CD4-positive, alpha-beta T cell (primary cell): ENCODE measurements at regions of chr1 and their contacts with region 1.

Region 1: DNA sequence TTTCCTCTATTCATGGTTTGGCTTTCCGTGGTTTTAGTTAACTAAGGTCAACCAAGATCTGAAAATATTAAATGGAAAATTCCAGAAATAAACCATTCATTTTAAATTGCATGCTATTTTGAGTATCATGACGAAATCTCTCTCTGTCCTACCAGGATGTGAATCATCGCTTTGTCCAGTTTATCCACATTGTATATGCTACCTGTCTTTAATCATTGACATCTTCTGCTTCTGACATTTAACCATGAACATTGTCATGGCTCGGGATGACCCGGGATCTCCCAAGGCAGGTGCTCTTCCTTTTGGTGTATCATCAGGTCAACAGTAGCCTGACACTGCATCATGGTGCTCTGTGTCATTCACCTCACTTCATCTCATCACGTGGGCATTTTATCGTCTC is 125.5 kb upstream of the HNRNPU start:
- DNase-seq: no peak
- ATAC-seq: no peak
- H3K4me3 ChIP-seq: no peak overlapping the region
- H3K4me3 Mint-ChIP-seq: no peak overlapping the region
- H3K27ac ChIP-seq: no peak overlapping the region
- H3K27ac Mint-ChIP-seq: no peak overlapping the region
- H3K4me1 ChIP-seq: no peaks in the 10 kb centered on the region
- H3K4me1 Mint-ChIP-seq: no peaks in the 10 kb centered on the region
- H3K27me3 ChIP-seq: no peaks in the 10 kb centered on the region
- H3K27me3 Mint-ChIP-seq: no peaks in the 10 kb centered on the region
- CTCF ChIP-seq: no peak

Region 2: GRCh38 chr1:244854865-244855578 is 134.8 kb before region 1 on chr1:
- CTCF ChIA-PET with region 1: no interaction called
- POLR2A ChIA-PET with region 1: no interaction called
- intact Hi-C with region 1: no loop called
- DNase-seq: peak in 1 of 14 experiments; percentile 29
- ATAC-seq: peak; percentile 31
- H3K4me3 ChIP-seq: no peak overlapping the region
- H3K4me3 Mint-ChIP-seq: peak overlapping the region; percentile 40
- H3K27ac ChIP-seq: peak overlapping the region; percentile 13 to 50
- H3K27ac Mint-ChIP-seq: peak overlapping the region; percentile 78
- H3K4me1 ChIP-seq: peaks cover 30% of the 10 kb centered on the region
- H3K4me1 Mint-ChIP-seq: peaks cover 99% of the 10 kb centered on the region
- H3K27me3 ChIP-seq: no peaks in the 10 kb centered on the region
- H3K27me3 Mint-ChIP-seq: no peaks in the 10 kb centered on the region
- CTCF ChIP-seq: no peak

Region 3: GRCh38 chr1:244945109-244945671 is 44.6 kb before region 1 on chr1:
- CTCF ChIA-PET with region 1: no interaction called
- POLR2A ChIA-PET with region 1: no interaction called
- intact Hi-C with region 1: no loop called
- DNase-seq: peak in 1 of 14 experiments; percentile 11
- ATAC-seq: no peak
- H3K4me3 ChIP-seq: no peak overlapping the region
- H3K4me3 Mint-ChIP-seq: no peak overlapping the region
- H3K27ac ChIP-seq: no peak overlapping the region
- H3K27ac Mint-ChIP-seq: no peak overlapping the region
- H3K4me1 ChIP-seq: no peaks in the 10 kb centered on the region
- H3K4me1 Mint-ChIP-seq: no peaks in the 10 kb centered on the region
- H3K27me3 ChIP-seq: no peaks in the 10 kb centered on the region
- H3K27me3 Mint-ChIP-seq: no peaks in the 10 kb centered on the region
- CTCF ChIP-seq: no peak

Region 4: GRCh38 chr1:245031041-245031440 is 41.2 kb after region 1 on chr1:
- CTCF ChIA-PET with region 1: no interaction called
- POLR2A ChIA-PET with region 1: no interaction called
- intact Hi-C with region 1: loop called in 1 of 2 experiments (anchors 5 kb)
- DNase-seq: no peak
- ATAC-seq: no peak
- H3K4me3 ChIP-seq: no peak overlapping the region
- H3K4me3 Mint-ChIP-seq: no peak overlapping the region
- H3K27ac ChIP-seq: no peak overlapping the region
- H3K27ac Mint-ChIP-seq: no peak overlapping the region
- H3K4me1 ChIP-seq: peaks cover 4% of the 10 kb centered on the region
- H3K4me1 Mint-ChIP-seq: no peaks in the 10 kb centered on the region
- H3K27me3 ChIP-seq: no peaks in the 10 kb centered on the region
- H3K27me3 Mint-ChIP-seq: no peaks in the 10 kb centered on the region
- CTCF ChIP-seq: no peak

Region 5: GRCh38 chr1:245156081-245156735 is 166.4 kb after region 1 on chr1:
- CTCF ChIA-PET with region 1: no interaction called
- POLR2A ChIA-PET with region 1: no interaction called
- intact Hi-C with region 1: no loop called
- DNase-seq: peak; percentile 36 to 82 (median 58)
- ATAC-seq: peak; percentile 88
- H3K4me3 ChIP-seq: peak overlapping the region; percentile 46
- H3K4me3 Mint-ChIP-seq: peak overlapping the region; percentile 79
- H3K27ac ChIP-seq: no peak overlapping the region
- H3K27ac Mint-ChIP-seq: no peak overlapping the region
- H3K4me1 ChIP-seq: peaks cover 37% of the 10 kb centered on the region
- H3K4me1 Mint-ChIP-seq: peaks cover 29% of the 10 kb centered on the region
- H3K27me3 ChIP-seq: peaks cover 36 to 62% of the 10 kb centered on the region in 2 experiments
- H3K27me3 Mint-ChIP-seq: peaks cover 74% of the 10 kb centered on the region
- CTCF ChIP-seq: peak; percentile 23

Region 6: DNA sequence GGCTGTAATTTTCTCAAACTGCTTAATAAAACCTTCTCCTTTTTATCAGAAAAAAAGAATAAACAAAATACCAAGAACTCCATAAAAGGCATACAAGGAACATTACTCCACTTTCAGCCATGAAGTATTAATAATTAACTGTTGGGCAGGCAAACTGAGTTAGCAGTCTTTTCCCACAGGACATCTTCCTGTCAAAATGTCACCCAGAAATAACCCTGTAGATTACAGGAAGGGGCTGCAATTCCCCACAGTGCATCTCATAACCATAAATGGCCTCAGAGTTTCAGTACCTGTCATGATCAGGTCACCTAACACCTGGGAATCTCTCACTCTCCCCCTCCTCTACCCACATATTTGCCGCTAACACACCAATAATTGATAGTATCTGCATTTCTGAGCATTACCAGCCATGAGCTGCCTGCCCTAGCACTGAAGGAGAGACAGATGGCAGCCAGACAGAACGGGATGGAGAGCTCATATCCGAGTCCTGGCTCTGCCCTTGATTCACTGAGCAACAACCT is 1042.3 kb after region 1 on chr1:
- CTCF ChIA-PET with region 1: no interaction called
- POLR2A ChIA-PET with region 1: no interaction called
- intact Hi-C with region 1: no loop called
- DNase-seq: no peak
- ATAC-seq: no peak
- H3K4me3 ChIP-seq: no peak overlapping the region
- H3K4me3 Mint-ChIP-seq: no peak overlapping the region
- H3K27ac ChIP-seq: no peak overlapping the region
- H3K27ac Mint-ChIP-seq: no peak overlapping the region
- H3K4me1 ChIP-seq: no peaks in the 10 kb centered on the region
- H3K4me1 Mint-ChIP-seq: no peaks in the 10 kb centered on the region
- H3K27me3 ChIP-seq: no peaks in the 10 kb centered on the region
- H3K27me3 Mint-ChIP-seq: no peaks in the 10 kb centered on the region
- CTCF ChIP-seq: no peak